Naive thymus-derived CD4-positive, alpha-beta T cell (primary cell): ENCODE measurements at regions of chr16 and their contacts with region 1.

Region 1: DNA sequence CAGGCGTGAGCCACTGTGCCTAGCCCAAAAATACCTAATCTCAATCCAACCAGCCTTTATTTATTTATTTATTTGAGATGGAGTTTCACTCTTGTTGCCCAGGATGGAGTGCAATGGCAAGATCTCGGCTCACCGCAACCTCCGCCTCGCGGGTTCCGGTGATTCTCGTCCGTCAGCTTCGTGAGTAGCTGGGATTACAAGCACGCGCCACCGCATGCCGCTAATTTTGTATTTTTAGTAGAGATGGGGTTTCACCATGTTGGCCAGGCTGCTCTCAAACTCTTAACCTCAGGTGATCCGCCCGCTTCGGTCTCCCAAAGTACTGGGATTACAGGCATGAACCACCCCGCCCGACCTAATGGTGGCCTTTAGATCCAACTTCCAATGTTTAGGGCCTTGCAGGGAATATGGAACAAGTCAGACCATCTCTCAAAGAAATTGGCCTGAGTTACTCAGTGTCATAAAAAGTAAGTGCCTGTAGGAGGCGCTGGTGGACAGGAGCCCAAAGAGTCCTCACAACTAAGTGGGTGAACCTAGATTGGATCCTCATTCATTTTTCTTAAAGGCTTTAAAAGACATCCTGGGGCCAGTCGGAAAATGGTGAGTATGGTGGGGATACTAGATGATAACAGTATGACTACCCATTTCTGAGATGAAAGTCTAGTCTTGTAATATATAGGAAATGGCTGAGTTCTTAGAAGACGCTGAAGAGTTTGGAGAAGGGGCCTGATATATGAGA is 4.6 kb downstream of the ZSCAN10 start:
- DNase-seq: peak in 8 of 9 donors; percentile 32 to 62 (median 54)
- ATAC-seq: peak; percentile 59
- H3K4me3 ChIP-seq: no peak overlapping the region
- H3K4me3 Mint-ChIP-seq: peak overlapping the region in 4 of 10 donors; percentile 27 to 63 (median 45)
- H3K27ac ChIP-seq: no peak overlapping the region
- H3K27ac Mint-ChIP-seq: peak overlapping the region; percentile 0 to 90 (median 72)
- H3K4me1 ChIP-seq: peaks cover 23 to 30% of the 10 kb centered on the region in 2 donors
- H3K4me1 Mint-ChIP-seq: peaks cover 9 to 57% (median 43%) of the 10 kb centered on the region in 7 donors
- H3K27me3 ChIP-seq: no peaks in the 10 kb centered on the region
- H3K27me3 Mint-ChIP-seq: no peaks in the 10 kb centered on the region

Region 2: GRCh38 chr16:3059000-3059722 is 35.3 kb before region 1 on chr16:
- CTCF ChIA-PET with region 1: interaction called, 5 read pairs
- POLR2A ChIA-PET with region 1: interaction called, 65 read pairs
- intact Hi-C with region 1: loop called in 1 of 2 experiments (anchors 1 kb)
- DNase-seq: peak; percentile 76 to 97 (median 89)
- ATAC-seq: peak; percentile 95
- H3K4me3 ChIP-seq: peak overlapping the region; percentile 77
- H3K4me3 Mint-ChIP-seq: peak overlapping the region; percentile 79 to 95 (median 88)
- H3K27ac ChIP-seq: peak overlapping the region; percentile 89
- H3K27ac Mint-ChIP-seq: peak overlapping the region in 8 of 9 donors; percentile 72 to 91 (median 85)
- H3K4me1 ChIP-seq: peaks cover 25 to 46% of the 10 kb centered on the region in 2 donors
- H3K4me1 Mint-ChIP-seq: peaks cover 39 to 63% (median 47%) of the 10 kb centered on the region in 7 donors
- H3K27me3 ChIP-seq: no peaks in the 10 kb centered on the region
- H3K27me3 Mint-ChIP-seq: no peaks in the 10 kb centered on the region

Region 3: DNA sequence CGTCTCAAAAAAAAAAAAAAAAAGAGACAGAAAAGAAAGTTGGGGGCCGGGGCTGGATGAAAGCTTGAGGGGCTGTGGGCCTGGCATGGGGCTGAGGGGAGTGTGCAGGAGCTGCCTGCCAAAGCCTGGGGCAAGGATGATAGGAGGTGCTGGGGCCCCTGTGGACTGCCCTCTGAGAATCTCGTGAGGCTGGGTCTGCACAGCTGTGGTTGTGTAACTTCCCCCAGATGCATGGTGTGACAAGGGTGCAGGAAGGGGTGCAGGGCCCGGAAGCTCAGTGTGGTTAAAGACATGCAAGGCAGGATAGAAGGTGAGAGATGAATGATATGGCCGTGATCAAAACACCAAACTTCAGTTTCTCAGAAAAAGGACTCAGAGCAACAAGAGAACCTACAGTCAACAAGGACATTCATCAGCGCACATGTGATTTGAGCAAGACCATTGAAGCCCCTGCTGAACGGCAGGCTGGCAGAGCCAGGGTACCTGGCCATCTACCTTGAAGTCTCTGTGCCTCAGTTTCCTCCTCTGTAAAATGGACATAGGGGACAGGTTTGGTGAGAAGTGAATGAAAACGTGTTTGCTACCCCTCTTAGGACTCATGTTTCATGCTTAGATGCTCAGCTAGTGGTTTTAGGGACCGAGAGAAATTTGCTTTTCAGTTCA is 19.5 kb before region 1 on chr16:
- CTCF ChIA-PET with region 1: interaction called, 45 read pairs
- POLR2A ChIA-PET with region 1: interaction called, 95 read pairs
- intact Hi-C with region 1: loop called in 1 of 2 experiments (anchors 1 kb)
- DNase-seq: peak; percentile 44 to 92 (median 90)
- ATAC-seq: peak; percentile 95
- H3K4me3 ChIP-seq: peak overlapping the region; percentile 37
- H3K4me3 Mint-ChIP-seq: peak overlapping the region; percentile 69 to 89 (median 83)
- H3K27ac ChIP-seq: peak overlapping the region; percentile 78
- H3K27ac Mint-ChIP-seq: peak overlapping the region; percentile 92 to 99 (median 99)
- H3K4me1 ChIP-seq: peaks cover 73 to 82% of the 10 kb centered on the region in 2 donors
- H3K4me1 Mint-ChIP-seq: peaks cover 67 to 93% (median 78%) of the 10 kb centered on the region in 7 donors
- H3K27me3 ChIP-seq: no peaks in the 10 kb centered on the region
- H3K27me3 Mint-ChIP-seq: no peaks in the 10 kb centered on the region

Region 4: GRCh38 chr16:3106205-3106928 is 11.9 kb after region 1 on chr16:
- CTCF ChIA-PET with region 1: interaction called, 8 read pairs
- POLR2A ChIA-PET with region 1: interaction called, 6 read pairs
- intact Hi-C with region 1: loop called in 1 of 2 experiments (anchors 1 kb)
- DNase-seq: peak; percentile 77 to 92 (median 85)
- ATAC-seq: peak; percentile 97
- H3K4me3 ChIP-seq: peak overlapping the region; percentile 76
- H3K4me3 Mint-ChIP-seq: peak overlapping the region; percentile 83 to 94 (median 87)
- H3K27ac ChIP-seq: peak overlapping the region; percentile 89
- H3K27ac Mint-ChIP-seq: peak overlapping the region; percentile 82 to 96 (median 92)
- H3K4me1 ChIP-seq: peaks cover 13 to 23% of the 10 kb centered on the region in 2 donors
- H3K4me1 Mint-ChIP-seq: peaks cover 26 to 45% (median 35%) of the 10 kb centered on the region in 7 donors
- H3K27me3 ChIP-seq: no peaks in the 10 kb centered on the region
- H3K27me3 Mint-ChIP-seq: peaks cover 0 to 7% (median 0%) of the 10 kb centered on the region in 5 donors

Region 5: GRCh38 chr16:3165111-3165822 is 70.8 kb after region 1 on chr16:
- CTCF ChIA-PET with region 1: interaction called, 3 read pairs
- POLR2A ChIA-PET with region 1: no interaction called
- intact Hi-C with region 1: loop called (anchors 1 kb)
- DNase-seq: no peak
- ATAC-seq: no peak
- H3K4me3 ChIP-seq: no peak overlapping the region
- H3K4me3 Mint-ChIP-seq: peak overlapping the region; percentile 39 to 80 (median 58)
- H3K27ac ChIP-seq: peak overlapping the region; percentile 55
- H3K27ac Mint-ChIP-seq: peak overlapping the region; percentile 36 to 93 (median 71)
- H3K4me1 ChIP-seq: peaks cover under 1 to 4% of the 10 kb centered on the region in 2 donors
- H3K4me1 Mint-ChIP-seq: peaks cover 9 to 24% (median 10%) of the 10 kb centered on the region in 7 donors
- H3K27me3 ChIP-seq: no peaks in the 10 kb centered on the region
- H3K27me3 Mint-ChIP-seq: peaks cover 0 to 27% (median 0%) of the 10 kb centered on the region in 5 donors

Region 6: GRCh38 chr16:3256146-3256865 is 161.8 kb after region 1 on chr16 and contains the start of gene MEFV:
- CTCF ChIA-PET with region 1: no interaction called
- POLR2A ChIA-PET with region 1: no interaction called
- intact Hi-C with region 1: no loop called
- DNase-seq: no peak
- ATAC-seq: peak; percentile 68
- H3K4me3 ChIP-seq: no peak within 1 kb of the TSS
- H3K4me3 Mint-ChIP-seq: peak within 1 kb of the TSS in 1 of 10 donors; percentile 17
- H3K27ac ChIP-seq: no peak within 1 kb of the TSS
- H3K27ac Mint-ChIP-seq: no peak within 1 kb of the TSS
- H3K4me1 ChIP-seq: no peaks in the 10 kb centered on the region
- H3K4me1 Mint-ChIP-seq: peaks cover 0 to 3% (median under 1%) of the 10 kb centered on the region in 7 donors
- H3K27me3 ChIP-seq: no peaks in the 10 kb centered on the region
- H3K27me3 Mint-ChIP-seq: no peaks in the 10 kb centered on the region
- total RNA-seq, gene MEFV: 0.38 to 38.1 (median 2.4) TPM in 4 of 5 experiments, not detected in the other